ENCODE measurements at regions of chr14 and their contacts with region 1.

Region 1: GRCh38 chr14:32588448-32589320 is 259.6 kb downstream of the AKAP6 start:
- DNase-seq: peak; percentile 15
- H3K4me3 Mint-ChIP-seq: no peak overlapping the region
- H3K27ac Mint-ChIP-seq: no peak overlapping the region
- H3K4me1 Mint-ChIP-seq: no peaks in the 10 kb centered on the region
- H3K27me3 Mint-ChIP-seq: no peaks in the 10 kb centered on the region

Region 2: DNA sequence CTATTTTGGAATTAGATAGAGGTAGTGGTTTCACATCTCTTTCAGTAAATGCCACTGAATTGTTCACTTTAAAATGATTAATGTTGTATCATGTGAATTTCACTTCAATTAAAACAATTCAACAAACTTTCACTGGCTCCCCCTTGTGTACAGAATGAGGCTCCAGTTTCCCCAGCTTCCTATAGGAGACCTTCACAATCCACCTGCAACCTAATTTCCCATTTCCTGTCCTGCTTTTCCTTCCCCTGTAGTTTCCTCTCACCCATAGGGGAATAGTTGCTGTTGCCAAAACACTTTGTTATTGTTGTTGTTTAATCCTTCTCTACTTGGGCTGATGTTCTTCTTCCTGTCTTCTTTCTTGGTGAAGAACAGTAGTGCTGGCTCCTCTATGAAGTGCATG is 409.7 kb after region 1 on chr14:
- CTCF ChIA-PET with region 1: no interaction called
- intact Hi-C with region 1: loop called (anchors 1 kb)
- DNase-seq: no peak
- H3K4me3 Mint-ChIP-seq: no peak overlapping the region
- H3K27ac Mint-ChIP-seq: no peak overlapping the region
- H3K4me1 Mint-ChIP-seq: no peaks in the 10 kb centered on the region
- H3K27me3 Mint-ChIP-seq: no peaks in the 10 kb centered on the region